GM18951 (cell line): ENCODE measurements at regions of chr7 and their contacts with region 1.

Region 1: GRCh38 chr7:118250860-118251494 is 26.5 kb downstream of the ANKRD7 start:
- POLR2A ChIP-seq: no peak

Region 2: DNA sequence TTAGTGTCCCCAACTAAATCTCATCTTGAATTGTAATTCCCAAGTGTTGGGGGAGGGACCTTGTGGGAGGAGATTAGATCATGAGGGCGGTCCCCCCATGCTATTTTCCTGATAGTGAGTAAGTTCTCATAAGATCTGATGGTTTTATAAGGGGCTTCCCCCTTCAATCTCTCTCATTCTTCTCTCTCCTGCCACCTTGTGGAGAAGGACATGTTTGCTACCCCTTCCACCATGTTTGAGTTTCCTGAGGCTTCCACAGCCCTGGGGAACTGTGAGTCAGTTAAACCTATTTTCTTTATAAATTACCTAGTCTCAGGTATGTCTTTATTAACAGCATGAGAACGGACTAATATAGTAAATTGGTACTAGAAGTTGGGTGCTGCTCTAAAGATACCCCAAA is 339.1 kb after region 1 on chr7:
- in situ Hi-C with region 1: loop called (anchors 25 kb)
- POLR2A ChIP-seq: no peak